Activated CD4-positive, alpha-beta T cell treated with anti-CD3 and anti-CD28 coated beads for 36 hours (primary cell): ENCODE measurements at regions of chr4 and their contacts with region 1.

Region 1: DNA sequence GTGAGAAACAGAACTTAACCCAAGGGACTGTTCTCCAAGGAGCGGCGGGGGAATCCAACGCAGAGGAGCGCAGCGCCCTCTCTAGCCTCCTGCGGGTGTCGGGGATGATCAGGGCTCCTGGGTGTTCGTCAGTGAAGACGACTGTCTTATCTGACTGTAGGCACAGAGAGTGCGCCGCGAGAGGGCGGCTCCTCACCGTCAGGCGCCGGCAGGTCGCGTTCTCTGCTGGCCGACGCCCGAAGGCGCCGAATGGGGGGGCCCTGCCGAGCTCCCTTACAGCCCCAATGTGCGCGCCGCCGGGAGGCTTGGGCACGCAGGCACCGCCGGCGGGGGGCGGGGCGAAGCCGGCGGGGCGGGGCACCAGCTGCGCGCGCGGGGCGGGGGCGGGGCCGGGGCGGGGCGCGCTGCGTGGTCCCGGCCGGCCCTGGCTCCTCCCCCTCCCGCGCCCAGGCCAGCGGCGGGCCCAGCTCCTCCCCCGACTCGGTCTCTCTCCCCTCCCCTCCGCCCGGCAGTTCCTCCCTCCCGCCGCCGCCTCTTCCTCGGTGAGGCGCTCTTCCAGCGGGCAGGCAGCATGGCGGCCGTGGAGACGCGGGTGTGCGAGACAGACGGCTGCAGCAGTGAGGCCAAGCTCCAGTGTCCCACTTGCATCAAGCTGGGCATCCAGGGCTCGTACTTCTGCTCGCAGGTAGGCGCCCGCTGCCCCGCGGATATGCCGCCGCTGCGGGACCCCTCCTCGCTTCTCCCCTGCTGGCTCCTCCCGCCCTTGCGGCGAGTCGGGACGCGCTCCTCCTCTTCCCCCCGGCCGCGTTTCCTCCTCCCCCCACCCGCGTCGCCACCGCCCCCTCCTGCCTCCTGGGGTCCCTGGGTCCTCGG is at the start of gene METAP1:
- DNase-seq: peak; percentile 98
- ATAC-seq: peak; percentile 91
- H3K4me3 Mint-ChIP-seq: peak within 1 kb of the TSS; percentile 81
- H3K27ac Mint-ChIP-seq: peak within 1 kb of the TSS; percentile 95
- H3K4me1 Mint-ChIP-seq: peaks cover 40% of the 10 kb centered on the region
- H3K27me3 Mint-ChIP-seq: no peaks in the 10 kb centered on the region
- total RNA-seq, gene METAP1: 67.9 to 75.2 TPM

Region 2: GRCh38 chr4:98260579-98261290 is 734.7 kb before region 1 on chr4:
- CTCF ChIA-PET with region 1: interaction called, 6 read pairs
- POLR2A ChIA-PET with region 1: interaction called, 3 read pairs
- intact Hi-C with region 1: loop called (anchors 1 kb)
- DNase-seq: peak; percentile 97
- ATAC-seq: peak; percentile 89
- H3K4me3 Mint-ChIP-seq: peak overlapping the region; percentile 91
- H3K27ac Mint-ChIP-seq: peak overlapping the region; percentile 95
- H3K4me1 Mint-ChIP-seq: peaks cover 49% of the 10 kb centered on the region
- H3K27me3 Mint-ChIP-seq: no peaks in the 10 kb centered on the region

Region 3: GRCh38 chr4:98522636-98523395 is 472.6 kb before region 1 on chr4:
- CTCF ChIA-PET with region 1: no interaction called
- POLR2A ChIA-PET with region 1: no interaction called
- intact Hi-C with region 1: no loop called
- DNase-seq: no peak
- ATAC-seq: peak; percentile 84
- H3K4me3 Mint-ChIP-seq: peak overlapping the region; percentile 28
- H3K27ac Mint-ChIP-seq: peak overlapping the region; percentile 74
- H3K4me1 Mint-ChIP-seq: peaks cover 64% of the 10 kb centered on the region
- H3K27me3 Mint-ChIP-seq: no peaks in the 10 kb centered on the region

Region 4: DNA sequence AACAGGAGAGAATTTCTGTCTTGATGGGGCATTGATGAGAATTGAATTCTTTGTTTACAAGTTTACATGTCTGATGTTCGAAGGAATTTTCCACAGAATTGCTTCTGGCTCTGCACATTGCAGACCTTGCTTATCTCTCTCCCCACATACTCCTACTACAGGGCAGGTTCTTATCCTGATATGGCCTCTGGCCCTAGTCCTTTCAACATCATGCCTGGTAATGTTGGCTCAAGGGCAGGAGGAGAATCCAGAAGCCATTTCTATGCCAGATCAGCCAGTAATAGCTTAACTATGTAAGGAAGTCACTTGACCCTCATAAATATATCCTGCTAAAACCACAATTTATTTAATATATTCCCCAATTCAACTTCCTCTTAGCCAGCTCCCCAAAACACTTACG is 312.7 kb before region 1 on chr4:
- CTCF ChIA-PET with region 1: no interaction called
- POLR2A ChIA-PET with region 1: interaction called, 10 read pairs
- intact Hi-C with region 1: no loop called
- DNase-seq: no peak
- ATAC-seq: no peak
- H3K4me3 Mint-ChIP-seq: no peak overlapping the region
- H3K27ac Mint-ChIP-seq: no peak overlapping the region
- H3K4me1 Mint-ChIP-seq: peaks cover 18% of the 10 kb centered on the region
- H3K27me3 Mint-ChIP-seq: no peaks in the 10 kb centered on the region

Region 5: DNA sequence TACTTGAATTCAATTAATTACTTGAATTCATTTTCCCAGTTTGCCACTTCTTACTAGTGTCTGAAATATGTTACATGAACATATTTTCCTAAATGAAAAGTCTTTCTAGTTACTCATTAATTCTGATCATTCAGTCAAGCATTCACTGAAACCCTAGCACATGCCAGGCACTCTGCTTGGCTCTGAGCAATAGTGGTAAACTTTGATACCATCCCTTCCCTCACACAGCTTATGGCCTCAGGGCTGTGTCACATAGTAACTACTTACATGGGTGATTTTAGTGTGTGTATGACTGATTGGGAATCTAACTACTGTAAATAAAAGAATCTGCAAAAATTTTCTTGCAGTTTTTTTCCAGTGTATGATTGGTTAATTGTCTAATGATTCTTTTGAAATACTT is 32.8 kb after region 1 on chr4:
- CTCF ChIA-PET with region 1: interaction called, 5 read pairs
- POLR2A ChIA-PET with region 1: interaction called, 4 read pairs
- intact Hi-C with region 1: loop called (anchors 2 kb)
- DNase-seq: peak; percentile 29
- ATAC-seq: peak; percentile 84
- H3K4me3 Mint-ChIP-seq: no peak overlapping the region
- H3K27ac Mint-ChIP-seq: no peak overlapping the region
- H3K4me1 Mint-ChIP-seq: peaks cover 66% of the 10 kb centered on the region
- H3K27me3 Mint-ChIP-seq: no peaks in the 10 kb centered on the region

Region 6: DNA sequence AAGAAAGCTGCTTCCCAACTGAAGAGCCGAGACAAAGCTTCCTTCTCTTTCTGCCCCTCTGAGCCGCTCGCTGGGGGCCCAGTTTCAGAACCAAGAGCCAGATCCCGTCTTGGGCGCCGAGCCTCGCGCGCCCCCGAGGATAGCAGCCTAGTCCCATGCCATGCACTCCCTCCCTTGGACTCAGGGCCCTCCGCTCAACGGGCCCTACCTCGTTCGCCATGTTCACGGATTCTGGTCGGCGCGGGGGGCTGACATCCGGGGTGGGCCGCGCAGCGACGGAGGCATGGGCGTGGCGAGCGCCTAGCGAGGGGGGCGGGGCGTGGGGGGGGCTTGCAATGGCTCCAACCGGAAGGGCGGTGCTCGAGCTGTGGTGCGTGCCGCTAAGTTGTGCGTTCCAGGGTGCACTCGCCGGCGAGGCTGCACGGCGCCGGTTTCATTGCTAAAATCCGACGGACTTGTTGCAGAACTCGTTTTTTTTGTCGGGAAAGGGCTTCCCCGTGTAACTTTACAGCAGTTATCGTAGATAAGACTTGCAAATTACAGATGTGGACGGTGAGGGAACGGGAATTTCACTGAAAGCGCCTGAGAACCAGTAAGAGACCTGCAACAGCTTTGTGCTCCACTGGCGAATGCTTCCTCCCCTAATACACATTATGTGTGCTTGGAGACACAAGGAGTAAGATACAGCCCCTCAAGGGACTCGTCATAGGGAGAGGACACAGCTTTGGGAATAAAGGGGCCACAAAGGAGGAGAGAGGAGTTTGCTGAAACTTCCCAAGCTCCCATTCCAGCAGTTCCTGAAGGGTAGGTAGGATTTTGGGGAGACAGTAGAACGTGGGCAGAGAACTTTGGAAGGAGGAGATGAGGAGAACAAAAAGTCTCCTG is 93.3 kb after region 1 on chr4 and contains the start of gene ADH5:
- CTCF ChIA-PET with region 1: interaction called, 7 read pairs
- POLR2A ChIA-PET with region 1: interaction called, 16 read pairs
- intact Hi-C with region 1: loop called (anchors 1 kb)
- DNase-seq: peak; percentile 96
- ATAC-seq: peak; percentile 97
- H3K4me3 Mint-ChIP-seq: peak within 1 kb of the TSS; percentile 98
- H3K27ac Mint-ChIP-seq: peak within 1 kb of the TSS; percentile 99
- H3K4me1 Mint-ChIP-seq: peaks cover 42% of the 10 kb centered on the region
- H3K27me3 Mint-ChIP-seq: no peaks in the 10 kb centered on the region
- total RNA-seq, gene ADH5: 81.3 to 119 TPM

Region 7: GRCh38 chr4:99868126-99868596 is 872.7 kb after region 1 on chr4:
- CTCF ChIA-PET with region 1: no interaction called
- POLR2A ChIA-PET with region 1: no interaction called
- intact Hi-C with region 1: no loop called
- DNase-seq: peak; percentile 49
- ATAC-seq: peak; percentile 95
- H3K4me3 Mint-ChIP-seq: no peak overlapping the region
- H3K27ac Mint-ChIP-seq: peak overlapping the region; percentile 72
- H3K4me1 Mint-ChIP-seq: peaks cover 12% of the 10 kb centered on the region
- H3K27me3 Mint-ChIP-seq: no peaks in the 10 kb centered on the region

Region 8: DNA sequence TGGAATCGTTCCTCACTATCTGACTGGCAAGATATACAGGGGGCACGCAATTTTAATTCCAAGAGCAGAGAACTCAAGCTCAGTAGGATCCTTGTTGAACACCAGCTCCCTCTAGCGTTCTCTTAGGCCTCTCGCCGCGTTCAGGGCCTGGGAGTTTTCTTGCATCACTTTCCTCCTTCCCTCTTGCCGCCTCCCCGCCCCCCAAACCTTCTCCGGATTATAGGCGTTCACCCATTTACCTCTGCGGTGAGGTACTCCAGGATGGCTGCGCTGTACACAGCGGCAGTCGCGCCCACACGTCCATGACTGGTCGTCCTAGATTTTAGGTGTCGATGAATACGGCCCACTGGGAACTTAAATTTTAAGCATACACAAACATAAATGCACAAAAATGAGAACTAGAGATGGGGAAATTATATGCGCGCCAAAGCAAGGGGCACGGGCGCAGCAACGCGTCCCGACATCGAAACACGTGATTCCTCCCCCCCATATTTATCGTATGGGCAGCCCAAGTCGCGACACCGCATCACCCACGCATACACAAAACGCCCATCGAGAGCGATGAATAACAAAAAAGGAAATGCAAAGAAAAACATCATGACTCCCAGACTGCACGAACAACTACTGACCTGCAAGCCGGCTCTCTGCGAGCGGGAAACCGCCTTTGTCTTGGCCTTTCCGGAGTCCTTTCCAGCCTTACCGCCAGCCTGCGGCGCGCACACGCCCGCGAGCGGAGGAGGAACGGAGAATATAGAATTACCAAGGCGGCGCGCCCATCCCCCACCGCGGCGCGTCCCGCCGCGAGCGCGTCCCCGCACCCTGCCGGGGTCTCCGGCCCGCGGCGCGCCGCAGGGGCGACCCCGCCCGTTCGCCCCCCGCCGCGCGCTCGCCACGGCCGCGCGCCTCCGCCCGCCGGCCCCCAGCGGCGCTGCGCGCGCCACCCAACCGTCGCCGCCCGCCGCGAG is 953.9 kb after region 1 on chr4:
- CTCF ChIA-PET with region 1: no interaction called
- POLR2A ChIA-PET with region 1: no interaction called
- intact Hi-C with region 1: loop called (anchors 1 to 5 kb)
- DNase-seq: peak; percentile 96
- ATAC-seq: peak; percentile 52
- H3K4me3 Mint-ChIP-seq: no peak overlapping the region
- H3K27ac Mint-ChIP-seq: no peak overlapping the region
- H3K4me1 Mint-ChIP-seq: peaks cover 33% of the 10 kb centered on the region
- H3K27me3 Mint-ChIP-seq: no peaks in the 10 kb centered on the region